BJ (cell line): ENCODE measurements at regions of chr3 and their contacts with region 1.

Region 1: GRCh38 chr3:24986612-24987011 is 441.5 kb upstream of the RARB start:
- DNase-seq: no peak
- H3K4me3 ChIP-seq: no peak overlapping the region
- H3K27me3 ChIP-seq: no peaks in the 10 kb centered on the region
- CTCF ChIP-seq: no peak

Region 2: GRCh38 chr3:24972491-24972890 is 14.1 kb before region 1 on chr3:
- CTCF ChIA-PET with region 1: no interaction called
- POLR2A ChIA-PET with region 1: no interaction called
- DNase-seq: no peak
- H3K4me3 ChIP-seq: no peak overlapping the region
- H3K27me3 ChIP-seq: no peaks in the 10 kb centered on the region
- CTCF ChIP-seq: no peak

Region 3: DNA sequence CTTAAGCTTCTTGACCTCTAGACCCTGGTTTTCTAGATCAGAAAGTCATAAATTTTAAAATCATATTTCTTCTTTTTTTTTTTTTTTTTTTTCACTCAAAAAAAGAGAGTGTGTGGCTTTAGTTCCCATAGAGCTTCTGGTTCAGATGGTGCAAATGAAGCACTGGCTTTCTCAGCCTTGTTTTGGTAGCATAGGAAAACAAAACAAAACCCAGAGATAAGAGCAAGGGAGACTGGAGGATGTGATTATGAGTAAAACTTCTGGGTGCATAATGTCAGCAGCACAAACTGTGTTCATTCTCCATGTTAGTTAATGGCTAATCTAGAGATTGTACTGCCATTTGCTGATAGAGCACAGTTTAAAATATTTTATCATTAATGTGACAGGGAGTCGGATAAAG is 496.8 kb after region 1 on chr3:
- CTCF ChIA-PET with region 1: no interaction called
- POLR2A ChIA-PET with region 1: interaction called, 14 read pairs
- DNase-seq: no peak
- H3K4me3 ChIP-seq: no peak overlapping the region
- H3K27me3 ChIP-seq: no peaks in the 10 kb centered on the region
- CTCF ChIP-seq: no peak